HepG2 (cell line): ENCODE measurements at regions of chr6 and their contacts with region 1.

Region 1: GRCh38 chr6:158220786-158221442 is 52.8 kb downstream of the GTF2H5 start:
- DNase-seq: peak; percentile 78
- ATAC-seq: peak; percentile 97
- H3K4me3 ChIP-seq: 0 out of 6 replicates have a peak overlapping the region, but pooled peaks of 1 of the 3 experiments have one; percentile 3
- H3K27ac ChIP-seq: no peak overlapping the region
- H3K4me1 ChIP-seq: peaks cover 21% of the 10 kb centered on the region
- H3K27me3 ChIP-seq: no peaks in the 10 kb centered on the region; a peak in 1 of 5 replicates
- CTCF ChIP-seq: peak; percentile 95
- EP300 ChIP-seq: no peak
- POLR2A ChIP-seq: no peak
- RAD21 ChIP-seq: peak; percentile 95

Region 2: DNA sequence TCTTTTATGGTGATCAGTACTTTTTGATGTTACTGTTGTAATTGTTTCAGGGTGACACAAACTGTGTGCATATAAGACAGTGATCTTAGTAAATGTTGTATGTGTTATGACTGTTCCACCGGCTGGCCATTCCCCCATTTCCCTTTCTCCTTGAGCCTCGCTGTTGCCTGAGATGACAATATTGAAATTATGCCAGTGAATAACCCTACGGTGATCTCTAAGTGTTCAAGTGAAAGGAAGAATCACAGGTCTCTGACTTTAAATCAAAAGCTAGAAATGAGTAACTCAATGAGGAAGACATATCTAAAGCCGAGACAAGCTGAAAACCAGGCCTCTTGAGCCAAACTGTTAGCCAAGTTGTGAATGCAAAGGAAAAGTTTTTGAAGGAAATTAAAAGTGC is 123.6 kb after region 1 on chr6:
- CTCF ChIA-PET with region 1: interaction called, 8 read pairs
- POLR2A ChIA-PET with region 1: interaction called, 3 read pairs
- in situ Hi-C with region 1: no loop called
- intact Hi-C with region 1: loop called (anchors 2 kb)
- DNase-seq: no peak
- ATAC-seq: no peak
- H3K4me3 ChIP-seq: no peak overlapping the region
- H3K27ac ChIP-seq: no peak overlapping the region
- H3K4me1 ChIP-seq: peaks cover 61% of the 10 kb centered on the region
- H3K27me3 ChIP-seq: no peaks in the 10 kb centered on the region
- CTCF ChIP-seq: no peak
- EP300 ChIP-seq: no peak
- POLR2A ChIP-seq: no peak
- RAD21 ChIP-seq: no peak

Region 3: GRCh38 chr6:158387036-158387435 is 166.1 kb after region 1 on chr6:
- CTCF ChIA-PET with region 1: interaction called, 16 read pairs
- POLR2A ChIA-PET with region 1: no interaction called
- in situ Hi-C with region 1: no loop called
- intact Hi-C with region 1: loop called (anchors 2 kb)
- DNase-seq: peak; percentile 46
- ATAC-seq: peak; percentile 49; the same call in 2 of the 3 replicates
- H3K4me3 ChIP-seq: no peak overlapping the region
- H3K27ac ChIP-seq: no peak overlapping the region
- H3K4me1 ChIP-seq: peaks cover 11% of the 10 kb centered on the region; the same call in 1 of the 2 replicates
- H3K27me3 ChIP-seq: no peaks in the 10 kb centered on the region
- CTCF ChIP-seq: peak; percentile 31
- EP300 ChIP-seq: no peak
- POLR2A ChIP-seq: no peak
- RAD21 ChIP-seq: no peak

Region 4: GRCh38 chr6:158518191-158519127 is 297.5 kb after region 1 on chr6:
- CTCF ChIA-PET with region 1: interaction called, 5 read pairs
- POLR2A ChIA-PET with region 1: no interaction called
- in situ Hi-C with region 1: loop called (anchors 25 kb)
- intact Hi-C with region 1: loop called (anchors 5 kb)
- DNase-seq: peak; percentile 55
- ATAC-seq: peak; percentile 72
- H3K4me3 ChIP-seq: 0 out of 6 replicates have a peak overlapping the region, but pooled peaks of 1 of the 3 experiments have one; percentile 1
- H3K27ac ChIP-seq: no peak overlapping the region
- H3K4me1 ChIP-seq: 0 out of 2 replicates have a peak, but pooled peaks cover 7% of the 10 kb centered on the region
- H3K27me3 ChIP-seq: no peaks in the 10 kb centered on the region
- CTCF ChIP-seq: peak; percentile 71
- EP300 ChIP-seq: no peak
- POLR2A ChIP-seq: no peak
- RAD21 ChIP-seq: peak; percentile 23; the same call in 1 of the 2 replicates

Region 5: DNA sequence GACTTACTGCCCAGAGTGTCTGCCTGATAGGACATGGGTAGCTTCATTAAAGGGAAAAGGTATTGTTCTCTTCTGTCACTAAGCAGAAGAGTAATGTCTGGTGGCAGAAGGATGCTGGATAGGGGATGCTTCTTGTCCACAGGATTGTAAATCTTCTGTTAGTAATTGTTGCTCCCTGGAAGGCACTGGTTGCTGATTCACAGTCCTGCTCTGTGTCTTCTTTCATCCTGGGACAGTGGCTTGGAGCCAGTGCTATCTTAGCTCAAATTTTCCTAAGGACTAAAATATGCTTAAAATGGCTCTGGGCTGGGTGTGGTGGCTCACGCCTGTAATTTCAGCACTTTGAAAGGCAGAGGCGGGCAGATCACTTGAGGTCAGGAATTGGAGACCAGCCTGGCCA is 476.9 kb after region 1 on chr6:
- CTCF ChIA-PET with region 1: no interaction called
- POLR2A ChIA-PET with region 1: no interaction called
- in situ Hi-C with region 1: loop called (anchors 10 kb)
- intact Hi-C with region 1: no loop called
- DNase-seq: no peak
- ATAC-seq: no peak
- H3K4me3 ChIP-seq: no peak overlapping the region
- H3K27ac ChIP-seq: no peak overlapping the region
- H3K4me1 ChIP-seq: 0 out of 2 replicates have a peak, but pooled peaks cover 7% of the 10 kb centered on the region
- H3K27me3 ChIP-seq: peaks cover 0 to 25% of the 10 kb centered on the region in 2 experiments; a peak in 2 of 5 replicates
- CTCF ChIP-seq: no peak
- EP300 ChIP-seq: no peak
- POLR2A ChIP-seq: no peak
- RAD21 ChIP-seq: no peak